Activated B cell treated with CpG ODN at 0.5 μM for 24 hours (primary cell): ENCODE measurements at regions of chr1 and their contacts with region 1.

Region 1: GRCh38 chr1:35192853-35193664 is at the start of gene SFPQ:
- DNase-seq: peak; percentile 95
- ATAC-seq: peak; percentile 91
- H3K4me3 Mint-ChIP-seq: peak within 1 kb of the TSS; percentile 95
- H3K27ac Mint-ChIP-seq: peak within 1 kb of the TSS; percentile 98
- H3K4me1 Mint-ChIP-seq: peaks cover 39% of the 10 kb centered on the region
- H3K27me3 Mint-ChIP-seq: no peaks in the 10 kb centered on the region
- CTCF ChIP-seq: no peak
- total RNA-seq, gene SFPQ: 380 and 429 TPM in 2 replicates

Region 2: GRCh38 chr1:34859446-34860200 is 333.4 kb before region 1 on chr1 and contains the start of gene SMIM12:
- CTCF ChIA-PET with region 1: no interaction called
- POLR2A ChIA-PET with region 1: interaction called, 4 read pairs
- intact Hi-C with region 1: loop called (anchors 1 kb)
- DNase-seq: peak; percentile 81
- ATAC-seq: peak; percentile 98
- H3K4me3 Mint-ChIP-seq: peak within 1 kb of the TSS; percentile 94
- H3K27ac Mint-ChIP-seq: peak within 1 kb of the TSS; percentile 82
- H3K4me1 Mint-ChIP-seq: peaks cover 34% of the 10 kb centered on the region
- H3K27me3 Mint-ChIP-seq: no peaks in the 10 kb centered on the region
- CTCF ChIP-seq: no peak
- total RNA-seq, gene SMIM12: 45.9 and 46.3 TPM in 2 replicates

Region 3: DNA sequence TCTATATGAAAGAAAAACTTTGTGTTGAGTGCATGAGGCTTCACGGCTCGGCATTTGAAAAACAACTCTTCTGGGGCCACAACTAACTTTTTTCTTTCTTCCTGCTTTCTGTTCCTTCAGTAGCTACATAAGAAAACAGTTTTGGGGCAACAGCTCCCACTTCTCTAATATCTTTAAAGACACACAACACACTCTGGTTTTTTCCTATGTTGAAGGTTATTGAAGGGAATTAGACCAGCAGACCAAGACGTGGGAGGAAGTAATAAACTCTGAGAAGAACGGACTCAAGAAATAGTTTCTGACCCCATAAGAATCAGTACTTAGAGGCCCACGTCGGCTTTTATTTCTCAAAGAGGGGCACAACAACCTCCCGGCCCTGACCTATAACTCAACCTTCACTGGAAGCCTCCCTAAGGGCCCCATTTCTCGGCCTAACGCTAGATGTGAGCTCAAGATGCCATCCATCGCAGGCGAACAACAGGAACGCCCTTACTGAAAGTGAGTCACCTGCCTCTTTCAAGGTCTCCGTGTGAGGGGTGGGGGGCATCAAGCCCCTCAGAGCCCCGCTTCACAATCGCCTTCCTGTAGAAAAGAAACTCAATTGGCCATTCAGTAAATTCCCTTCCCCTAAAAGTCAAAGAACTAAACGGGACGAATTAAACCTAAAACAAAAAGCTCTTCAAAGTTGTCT is 162.2 kb before region 1 on chr1:
- CTCF ChIA-PET with region 1: no interaction called
- POLR2A ChIA-PET with region 1: interaction called, 10 read pairs
- intact Hi-C with region 1: loop called (anchors 1 kb)
- DNase-seq: peak; percentile 33
- ATAC-seq: peak; percentile 40
- H3K4me3 Mint-ChIP-seq: peak overlapping the region; percentile 99
- H3K27ac Mint-ChIP-seq: peak overlapping the region; percentile 98
- H3K4me1 Mint-ChIP-seq: peaks cover 38% of the 10 kb centered on the region
- H3K27me3 Mint-ChIP-seq: no peaks in the 10 kb centered on the region
- CTCF ChIP-seq: no peak

Region 4: GRCh38 chr1:35157904-35158303 is 35.2 kb before region 1 on chr1:
- CTCF ChIA-PET with region 1: no interaction called
- POLR2A ChIA-PET with region 1: no interaction called
- intact Hi-C with region 1: no loop called
- DNase-seq: no peak
- ATAC-seq: no peak
- H3K4me3 Mint-ChIP-seq: no peak overlapping the region
- H3K27ac Mint-ChIP-seq: no peak overlapping the region
- H3K4me1 Mint-ChIP-seq: no peaks in the 10 kb centered on the region
- H3K27me3 Mint-ChIP-seq: peaks cover 3% of the 10 kb centered on the region
- CTCF ChIP-seq: no peak

Region 5: DNA sequence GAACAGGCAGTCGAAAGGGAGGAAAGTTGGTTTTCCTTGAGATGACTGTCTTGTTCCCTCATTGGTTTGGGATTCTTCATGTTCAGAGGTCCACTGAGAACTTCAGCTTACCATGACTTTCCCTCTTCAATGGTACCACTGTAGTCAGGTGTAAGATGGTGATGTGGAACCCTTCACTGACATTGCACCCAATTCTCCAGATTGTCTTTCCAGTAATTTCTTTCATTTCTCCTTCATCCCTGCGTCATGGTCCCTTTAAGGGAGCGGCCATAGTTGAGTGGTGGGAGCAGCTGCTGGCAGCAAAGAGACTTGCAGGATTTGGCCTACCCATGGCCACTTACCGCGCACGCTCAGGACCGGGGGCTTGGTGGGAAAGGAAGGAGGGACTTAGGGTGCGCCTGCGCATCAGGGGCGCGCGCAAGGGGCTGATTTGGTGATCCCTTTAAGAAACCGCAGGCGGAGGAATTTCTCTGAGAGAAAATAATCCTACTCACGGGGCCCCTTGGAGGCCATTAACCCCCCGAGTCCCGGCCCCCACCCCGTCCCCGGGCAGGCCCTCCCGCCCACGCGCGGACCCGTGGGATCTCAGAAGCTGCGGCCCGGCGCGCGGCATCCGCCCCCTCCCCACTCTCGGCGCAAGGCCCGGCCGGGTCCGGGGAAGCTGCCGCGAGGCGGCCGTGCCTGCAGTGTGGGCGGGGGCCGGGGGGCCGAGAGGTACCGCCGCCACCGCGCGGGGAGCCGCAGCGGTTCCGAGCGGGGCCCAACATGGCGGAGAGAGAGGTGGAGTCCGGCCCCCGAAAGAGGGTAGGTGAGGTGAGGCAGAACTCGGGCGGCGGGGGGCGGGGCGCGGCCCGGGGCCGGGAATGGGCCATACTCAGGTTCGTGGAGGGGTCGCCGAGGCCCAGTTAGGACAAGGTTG is 75.5 kb after region 1 on chr1 and contains the start of gene ZMYM4:
- CTCF ChIA-PET with region 1: no interaction called
- POLR2A ChIA-PET with region 1: interaction called, 20 read pairs
- intact Hi-C with region 1: loop called (anchors 1 kb)
- DNase-seq: peak; percentile 85
- ATAC-seq: peak; percentile 92
- H3K4me3 Mint-ChIP-seq: peak within 1 kb of the TSS; percentile 86
- H3K27ac Mint-ChIP-seq: peak within 1 kb of the TSS; percentile 82
- H3K4me1 Mint-ChIP-seq: peaks cover 28% of the 10 kb centered on the region
- H3K27me3 Mint-ChIP-seq: peaks cover 11% of the 10 kb centered on the region
- CTCF ChIP-seq: no peak
- total RNA-seq, gene ZMYM4: 42.4 and 46.4 TPM in 2 replicates

Region 6: DNA sequence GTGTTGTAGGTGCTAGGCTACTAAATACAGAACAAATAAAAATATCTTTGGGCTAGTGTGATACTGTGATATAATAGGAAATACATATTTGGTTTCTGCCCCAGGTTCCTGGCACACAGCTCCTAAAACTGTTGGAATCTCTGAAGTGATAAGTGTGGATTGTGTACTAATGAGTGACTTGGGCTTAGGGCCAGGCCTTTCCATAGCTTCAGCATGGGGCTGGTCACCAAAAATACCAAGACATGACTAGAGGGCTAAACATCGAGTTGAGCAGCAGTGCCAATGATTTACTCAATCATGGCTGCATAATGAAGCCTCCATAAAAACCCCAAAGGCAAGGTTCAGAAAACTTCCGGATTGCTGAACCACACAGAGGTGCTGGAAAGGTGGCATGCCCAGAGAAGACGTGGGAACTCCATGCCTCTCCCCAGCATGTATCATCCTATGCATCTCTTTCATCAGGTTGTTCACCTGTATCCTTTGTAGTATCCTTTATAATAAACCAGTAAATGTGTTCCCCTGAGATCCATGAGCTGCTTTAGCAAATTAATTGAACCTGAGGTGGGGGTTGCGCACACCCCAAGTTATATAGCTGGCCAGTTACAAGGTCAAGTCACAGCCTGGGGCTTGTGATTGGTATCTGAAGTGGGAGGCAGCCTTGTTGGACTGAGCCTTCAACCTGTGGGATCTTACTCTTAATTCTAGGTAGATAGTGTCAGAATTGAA is 127.1 kb after region 1 on chr1:
- CTCF ChIA-PET with region 1: no interaction called
- POLR2A ChIA-PET with region 1: no interaction called
- intact Hi-C with region 1: no loop called
- DNase-seq: no peak
- ATAC-seq: no peak
- H3K4me3 Mint-ChIP-seq: no peak overlapping the region
- H3K27ac Mint-ChIP-seq: no peak overlapping the region
- H3K4me1 Mint-ChIP-seq: peaks cover 7% of the 10 kb centered on the region
- H3K27me3 Mint-ChIP-seq: no peaks in the 10 kb centered on the region
- CTCF ChIP-seq: no peak